IMR-90 (cell line): ENCODE measurements at regions of chr6 and their contacts with region 1.

Region 1: GRCh38 chr6:45591306-45591705 is 213.6 kb upstream of the SUPT3H start:
- DNase-seq: peak; percentile 32
- ATAC-seq: no peak
- H3K4me3 ChIP-seq: no peak overlapping the region
- H3K27ac ChIP-seq: no peak overlapping the region
- H3K4me1 ChIP-seq: peaks cover 13% of the 10 kb centered on the region
- H3K27me3 ChIP-seq: no peaks in the 10 kb centered on the region
- CTCF ChIP-seq: no peak
- POLR2A ChIP-seq: no peak
- RAD21 ChIP-seq: no peak

Region 2: DNA sequence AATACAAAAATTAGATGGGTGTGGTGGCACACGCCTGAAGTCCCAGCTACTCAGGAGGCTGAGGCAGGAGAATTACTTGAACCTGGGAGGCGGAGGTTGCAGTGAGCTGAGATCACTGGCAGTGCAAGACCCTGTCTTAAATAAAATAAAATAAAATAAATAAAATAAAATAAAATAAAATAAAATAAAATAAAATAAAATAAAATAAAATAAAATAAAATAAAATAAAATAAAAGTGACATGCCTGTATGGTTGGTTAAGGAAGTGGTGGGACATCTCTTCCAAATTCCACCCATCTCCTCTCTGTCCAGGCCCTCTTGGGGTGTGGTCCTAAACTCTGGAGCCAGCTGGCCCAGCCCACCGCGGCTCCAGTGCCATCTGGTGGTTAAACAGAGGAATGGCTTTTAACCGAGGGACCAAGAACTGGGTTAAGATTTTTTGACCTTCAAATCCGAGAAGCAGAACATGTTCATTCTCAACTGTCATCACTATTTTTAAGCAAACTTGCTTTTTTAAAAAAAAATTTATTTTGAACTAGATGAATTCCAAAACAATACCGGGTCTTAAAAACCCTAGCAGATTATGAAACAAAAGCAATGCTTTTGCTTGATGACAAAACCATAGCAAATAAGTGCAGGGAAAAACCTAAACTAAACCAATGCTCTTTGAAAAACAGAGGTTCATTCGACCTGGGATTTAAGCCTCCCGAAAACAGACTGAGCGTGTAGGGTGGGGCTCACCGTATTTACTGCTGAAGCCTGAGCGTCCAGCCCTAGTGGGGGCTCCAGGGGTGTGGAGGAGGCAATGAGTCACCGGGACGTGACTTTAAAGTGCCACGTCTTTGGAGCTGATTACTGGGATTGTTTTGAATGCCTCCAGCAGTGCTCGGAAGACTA is 1135.0 kb before region 1 on chr6:
- CTCF ChIA-PET with region 1: no interaction called
- POLR2A ChIA-PET with region 1: no interaction called
- dilution Hi-C with region 1: no loop called
- in situ Hi-C with region 1: no loop called
- intact Hi-C with region 1: no loop called
- DNase-seq: peak; percentile 50
- ATAC-seq: peak; percentile 81
- H3K4me3 ChIP-seq: peak overlapping the region; percentile 17; the same call in 1 of the 2 replicates
- H3K27ac ChIP-seq: no peak overlapping the region
- H3K4me1 ChIP-seq: peaks cover 17% of the 10 kb centered on the region
- H3K27me3 ChIP-seq: peaks cover 6% of the 10 kb centered on the region; the same call in 1 of the 2 replicates
- CTCF ChIP-seq: peak; percentile 78
- POLR2A ChIP-seq: no peak
- RAD21 ChIP-seq: peak; percentile 71

Region 3: DNA sequence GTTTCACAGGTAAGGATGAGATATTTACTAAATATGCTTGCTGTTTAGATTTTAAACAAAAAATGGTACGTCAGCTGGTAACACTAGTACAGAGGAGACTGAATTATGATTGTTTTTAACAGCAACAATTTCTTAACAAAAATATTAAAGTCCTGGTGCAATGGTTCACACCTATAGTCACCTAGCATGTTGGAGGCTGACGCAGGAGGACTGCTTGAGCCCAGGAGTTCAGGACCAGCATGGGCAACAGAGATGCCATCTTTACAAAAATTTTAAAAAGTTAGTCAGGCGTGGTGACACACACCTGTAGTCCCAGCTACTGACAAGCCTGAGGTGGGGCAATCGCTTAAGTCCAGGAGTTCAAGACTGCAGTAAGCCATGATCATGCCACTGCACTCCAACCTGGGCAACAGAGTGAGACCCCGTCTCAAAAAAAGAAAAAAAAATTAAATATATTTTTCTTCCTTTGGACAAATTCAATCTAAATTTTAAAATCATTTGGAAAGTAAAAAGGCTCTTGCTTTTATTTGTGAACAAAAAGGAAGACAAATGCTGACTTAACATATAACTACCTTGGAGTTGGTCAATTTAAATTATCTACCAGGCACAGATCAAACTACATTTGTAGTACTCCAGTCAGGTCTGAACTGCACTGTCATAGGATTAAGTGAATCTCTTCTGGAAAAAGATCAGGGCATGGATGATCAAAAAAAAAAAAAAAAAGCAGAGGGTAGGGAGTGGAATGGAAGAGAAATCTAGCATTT is 301.4 kb before region 1 on chr6:
- CTCF ChIA-PET with region 1: no interaction called
- POLR2A ChIA-PET with region 1: no interaction called
- dilution Hi-C with region 1: no loop called
- in situ Hi-C with region 1: no loop called
- intact Hi-C with region 1: no loop called
- DNase-seq: no peak
- ATAC-seq: no peak
- H3K4me3 ChIP-seq: no peak overlapping the region
- H3K27ac ChIP-seq: no peak overlapping the region
- H3K4me1 ChIP-seq: no peaks in the 10 kb centered on the region
- H3K27me3 ChIP-seq: no peaks in the 10 kb centered on the region
- CTCF ChIP-seq: no peak
- POLR2A ChIP-seq: no peak
- RAD21 ChIP-seq: no peak

Region 4: GRCh38 chr6:45619994-45620471 is 28.7 kb after region 1 on chr6:
- CTCF ChIA-PET with region 1: interaction called, 10 read pairs
- POLR2A ChIA-PET with region 1: no interaction called
- dilution Hi-C with region 1: no loop called
- in situ Hi-C with region 1: no loop called
- intact Hi-C with region 1: no loop called
- DNase-seq: peak; percentile 63
- ATAC-seq: peak; percentile 44; the same call in 1 of the 2 replicates
- H3K4me3 ChIP-seq: no peak overlapping the region
- H3K27ac ChIP-seq: no peak overlapping the region
- H3K4me1 ChIP-seq: peaks cover 5% of the 10 kb centered on the region
- H3K27me3 ChIP-seq: no peaks in the 10 kb centered on the region
- CTCF ChIP-seq: no peak
- POLR2A ChIP-seq: no peak
- RAD21 ChIP-seq: no peak

Region 5: GRCh38 chr6:45663551-45664221 is 72.4 kb after region 1 on chr6:
- CTCF ChIA-PET with region 1: no interaction called
- POLR2A ChIA-PET with region 1: no interaction called
- dilution Hi-C with region 1: no loop called
- in situ Hi-C with region 1: no loop called
- intact Hi-C with region 1: no loop called
- DNase-seq: no peak
- ATAC-seq: peak; percentile 55
- H3K4me3 ChIP-seq: peak overlapping the region; percentile 19; the same call in 1 of the 2 replicates
- H3K27ac ChIP-seq: no peak overlapping the region
- H3K4me1 ChIP-seq: peaks cover 10% of the 10 kb centered on the region
- H3K27me3 ChIP-seq: no peaks in the 10 kb centered on the region
- CTCF ChIP-seq: no peak
- POLR2A ChIP-seq: no peak
- RAD21 ChIP-seq: no peak

Region 6: GRCh38 chr6:46293641-46294316 is 702.5 kb after region 1 on chr6:
- CTCF ChIA-PET with region 1: no interaction called
- POLR2A ChIA-PET with region 1: no interaction called
- dilution Hi-C with region 1: no loop called
- in situ Hi-C with region 1: no loop called
- intact Hi-C with region 1: no loop called
- DNase-seq: no peak
- ATAC-seq: no peak
- H3K4me3 ChIP-seq: no peak overlapping the region
- H3K27ac ChIP-seq: no peak overlapping the region
- H3K4me1 ChIP-seq: no peaks in the 10 kb centered on the region
- H3K27me3 ChIP-seq: no peaks in the 10 kb centered on the region
- CTCF ChIP-seq: no peak
- POLR2A ChIP-seq: no peak
- RAD21 ChIP-seq: no peak